ENCODE measurements at regions of chr5 and their contacts with region 1.

Region 1: GRCh38 chr5:147188200-147189108 is 46.4 kb upstream of the STK32A start:
- DNase-seq: peak; percentile 62 to 83 (median 75)
- H3K4me3 ChIP-seq: peak overlapping the region in 1 of 4 donors; percentile 41
- H3K27ac ChIP-seq: no peak overlapping the region
- H3K4me1 ChIP-seq: peaks cover 0 to 16% of the 10 kb centered on the region in 2 donors
- H3K27me3 ChIP-seq: no peaks in the 10 kb centered on the region
- CTCF ChIP-seq: peak; percentile 87 to 94 (median 93)
- POLR2A ChIP-seq: no peak

Region 2: DNA sequence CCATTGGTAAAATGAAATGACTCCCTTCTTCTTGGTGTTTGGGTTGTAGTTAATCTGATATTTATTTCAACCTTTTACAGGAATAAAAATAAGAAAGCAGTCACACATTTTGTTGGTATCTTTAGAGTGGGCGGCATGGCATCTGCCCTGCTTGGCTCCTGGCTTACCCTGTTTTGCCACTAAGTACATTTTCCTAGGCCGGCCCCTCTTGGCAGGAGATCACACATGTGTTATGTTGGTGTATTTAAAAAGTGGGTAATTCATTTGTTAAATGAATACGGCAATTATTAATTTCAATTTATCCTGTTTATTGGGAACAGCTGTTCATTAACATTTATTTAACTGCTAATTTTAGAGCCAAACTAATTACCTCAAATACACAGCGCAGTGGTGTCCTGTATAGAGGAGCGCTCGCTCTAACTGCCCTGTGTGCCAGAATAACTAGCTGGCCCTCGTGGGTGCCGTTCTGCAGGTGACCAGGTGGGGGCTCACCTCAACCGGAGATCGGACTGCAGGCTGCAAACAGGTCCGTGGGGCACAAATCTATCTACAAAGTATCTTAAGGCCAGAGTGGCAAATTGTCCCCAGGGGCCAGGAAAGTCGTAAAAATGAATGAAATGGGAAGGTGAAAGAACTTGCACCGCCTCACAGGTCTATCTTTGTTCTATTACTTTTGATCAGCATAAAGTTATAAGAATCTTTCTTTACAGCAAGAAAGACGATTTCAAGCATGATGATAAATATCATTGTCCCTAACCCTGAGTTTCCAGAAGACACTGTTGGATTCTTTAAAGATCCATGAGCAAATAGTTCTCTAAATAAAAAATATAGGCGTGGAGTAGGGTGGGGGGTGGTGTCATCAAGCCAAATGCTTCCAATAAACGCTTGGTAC is 646.2 kb before region 1 on chr5:
- intact Hi-C with region 1: loop called in 1 of 2 experiments (anchors 5 kb)
- DNase-seq: peak; percentile 64 to 91 (median 80)
- H3K4me3 ChIP-seq: no peak overlapping the region
- H3K27ac ChIP-seq: no peak overlapping the region
- H3K4me1 ChIP-seq: no peaks in the 10 kb centered on the region
- H3K27me3 ChIP-seq: no peaks in the 10 kb centered on the region
- CTCF ChIP-seq: peak; percentile 66 to 84 (median 74)
- POLR2A ChIP-seq: no peak

Region 3: GRCh38 chr5:147098233-147098790 is 90.1 kb before region 1 on chr5:
- intact Hi-C with region 1: loop called in 1 of 2 experiments (anchors 10 kb)
- DNase-seq: peak; percentile 27 to 81 (median 55)
- H3K4me3 ChIP-seq: no peak overlapping the region
- H3K27ac ChIP-seq: peak overlapping the region in 1 of 5 donors; percentile 44
- H3K4me1 ChIP-seq: peaks cover 0 to 11% of the 10 kb centered on the region in 2 donors
- H3K27me3 ChIP-seq: no peaks in the 10 kb centered on the region
- CTCF ChIP-seq: peak; percentile 41 to 63 (median 58)
- POLR2A ChIP-seq: no peak

Region 4: GRCh38 chr5:147223948-147224791 is 35.7 kb after region 1 on chr5:
- intact Hi-C with region 1: no loop called
- DNase-seq: peak; percentile 42 to 72 (median 62)
- H3K4me3 ChIP-seq: no peak overlapping the region
- H3K27ac ChIP-seq: no peak overlapping the region
- H3K4me1 ChIP-seq: no peaks in the 10 kb centered on the region
- H3K27me3 ChIP-seq: no peaks in the 10 kb centered on the region
- CTCF ChIP-seq: peak; percentile 51 to 75 (median 66)
- POLR2A ChIP-seq: no peak

Region 5: GRCh38 chr5:147267082-147267832 is 78.8 kb after region 1 on chr5:
- intact Hi-C with region 1: no loop called
- DNase-seq: no peak
- H3K4me3 ChIP-seq: no peak overlapping the region
- H3K27ac ChIP-seq: no peak overlapping the region
- H3K4me1 ChIP-seq: no peaks in the 10 kb centered on the region
- H3K27me3 ChIP-seq: no peaks in the 10 kb centered on the region
- CTCF ChIP-seq: no peak
- POLR2A ChIP-seq: no peak

Region 6: GRCh38 chr5:147321569-147321968 is 133.1 kb after region 1 on chr5:
- intact Hi-C with region 1: no loop called
- DNase-seq: no peak
- H3K4me3 ChIP-seq: no peak overlapping the region
- H3K27ac ChIP-seq: no peak overlapping the region
- H3K4me1 ChIP-seq: no peaks in the 10 kb centered on the region
- H3K27me3 ChIP-seq: no peaks in the 10 kb centered on the region
- CTCF ChIP-seq: no peak
- POLR2A ChIP-seq: no peak

Region 7: DNA sequence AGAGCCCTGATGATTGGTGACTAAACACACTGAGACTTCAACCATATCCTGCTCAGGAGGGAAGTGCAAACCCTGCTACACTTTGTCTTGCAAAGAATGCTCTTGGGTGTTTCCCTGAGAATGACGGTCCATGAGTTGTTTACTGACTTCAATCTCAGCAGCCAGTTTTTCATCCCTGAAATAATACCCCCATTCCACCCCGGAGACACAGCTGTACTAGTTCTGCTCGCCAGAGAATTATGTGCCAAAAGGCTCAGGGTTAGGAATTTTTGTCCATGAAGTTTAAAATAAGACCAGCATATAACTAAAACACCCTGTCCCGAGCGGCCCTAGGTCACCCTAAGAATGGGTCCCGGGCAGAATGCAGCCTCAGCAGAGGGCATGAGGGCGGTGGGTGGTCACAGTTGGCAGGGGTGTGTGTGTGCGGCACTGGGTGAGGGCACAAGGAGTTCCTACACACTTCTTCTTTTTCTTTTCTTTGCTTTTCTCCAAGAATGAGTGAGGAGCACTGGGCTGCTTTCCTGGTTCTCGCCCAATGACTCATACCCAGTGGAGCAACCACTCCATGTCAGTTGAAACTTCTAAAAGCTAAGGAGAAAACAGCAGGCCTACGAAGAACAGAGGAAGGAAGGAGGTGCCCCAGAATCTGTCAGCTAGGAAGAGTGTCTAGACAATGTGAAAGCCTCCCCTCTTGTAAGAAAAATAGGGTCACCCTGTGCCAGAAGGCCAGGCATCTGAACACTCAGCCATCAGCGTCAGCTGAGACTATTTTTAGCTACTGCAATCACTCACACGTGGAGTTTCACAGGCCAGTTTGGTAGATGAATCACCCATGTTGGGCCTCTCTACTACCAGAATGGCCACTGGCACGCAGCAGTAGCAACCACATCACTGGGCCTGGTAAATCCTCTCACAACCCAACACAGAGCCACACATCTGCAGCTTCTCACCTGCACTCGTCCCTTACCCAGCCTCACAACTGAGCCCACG is 215.5 kb after region 1 on chr5:
- intact Hi-C with region 1: no loop called
- DNase-seq: peak; percentile 64 to 86 (median 84)
- H3K4me3 ChIP-seq: no peak overlapping the region
- H3K27ac ChIP-seq: peak overlapping the region; percentile 56 to 86 (median 67)
- H3K4me1 ChIP-seq: peaks cover 26 to 29% of the 10 kb centered on the region in 2 donors
- H3K27me3 ChIP-seq: no peaks in the 10 kb centered on the region
- CTCF ChIP-seq: no peak
- POLR2A ChIP-seq: no peak

Measured in adrenal gland (tissue), 19 donors.